Breast epithelium (tissue), 4 donors: ENCODE measurements at regions of chr12 and their contacts with region 1.

Region 1: DNA sequence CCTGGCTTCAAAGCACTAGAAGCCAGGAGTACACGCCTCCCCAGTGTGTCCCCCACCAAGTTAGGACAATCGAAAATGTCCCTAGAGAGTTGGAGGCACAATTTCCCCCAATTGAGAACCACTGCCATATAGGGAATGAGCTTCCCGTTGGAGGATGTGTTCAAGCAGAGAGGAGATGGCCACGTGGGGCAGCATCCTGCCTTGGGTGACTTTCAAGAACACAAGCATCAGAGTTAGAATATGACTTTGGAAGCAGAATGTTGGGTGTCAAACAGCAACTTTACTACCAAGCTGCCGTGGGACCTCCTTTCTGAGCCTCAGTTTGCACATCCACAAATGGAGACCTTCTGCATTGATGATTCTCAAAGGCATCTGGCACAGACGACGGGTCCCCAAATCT is 56.5 kb downstream of the RFLNA start:
- DNase-seq: no peak
- H3K4me3 ChIP-seq: no peak overlapping the region
- H3K27ac ChIP-seq: no peak overlapping the region
- H3K4me1 ChIP-seq: no peaks in the 10 kb centered on the region
- H3K27me3 ChIP-seq: no peaks in the 10 kb centered on the region
- CTCF ChIP-seq: no peak
- POLR2A ChIP-seq: no peak

Region 2: GRCh38 chr12:124327362-124328043 is 23.9 kb before region 1 on chr12:
- intact Hi-C with region 1: loop called (anchors 1 kb)
- DNase-seq: no peak
- H3K4me3 ChIP-seq: peak overlapping the region in 1 of 3 donors; percentile 0
- H3K27ac ChIP-seq: peak overlapping the region; percentile 52 to 78
- H3K4me1 ChIP-seq: no peaks in the 10 kb centered on the region
- H3K27me3 ChIP-seq: no peaks in the 10 kb centered on the region
- CTCF ChIP-seq: no peak
- POLR2A ChIP-seq: no peak

Region 3: GRCh38 chr12:124422570-124423523 is 71.4 kb after region 1 on chr12:
- intact Hi-C with region 1: no loop called
- DNase-seq: peak; percentile 88 to 90
- H3K4me3 ChIP-seq: peak overlapping the region; percentile 10 to 64 (median 35)
- H3K27ac ChIP-seq: peak overlapping the region; percentile 94 to 98
- H3K4me1 ChIP-seq: peaks cover 12 to 17% of the 10 kb centered on the region in 2 donors
- H3K27me3 ChIP-seq: no peaks in the 10 kb centered on the region
- CTCF ChIP-seq: peak in 1 of 3 donors; percentile 16
- POLR2A ChIP-seq: no peak